AG04450 (cell line): ENCODE measurements at regions of chr12 and their contacts with region 1.

Region 1: DNA sequence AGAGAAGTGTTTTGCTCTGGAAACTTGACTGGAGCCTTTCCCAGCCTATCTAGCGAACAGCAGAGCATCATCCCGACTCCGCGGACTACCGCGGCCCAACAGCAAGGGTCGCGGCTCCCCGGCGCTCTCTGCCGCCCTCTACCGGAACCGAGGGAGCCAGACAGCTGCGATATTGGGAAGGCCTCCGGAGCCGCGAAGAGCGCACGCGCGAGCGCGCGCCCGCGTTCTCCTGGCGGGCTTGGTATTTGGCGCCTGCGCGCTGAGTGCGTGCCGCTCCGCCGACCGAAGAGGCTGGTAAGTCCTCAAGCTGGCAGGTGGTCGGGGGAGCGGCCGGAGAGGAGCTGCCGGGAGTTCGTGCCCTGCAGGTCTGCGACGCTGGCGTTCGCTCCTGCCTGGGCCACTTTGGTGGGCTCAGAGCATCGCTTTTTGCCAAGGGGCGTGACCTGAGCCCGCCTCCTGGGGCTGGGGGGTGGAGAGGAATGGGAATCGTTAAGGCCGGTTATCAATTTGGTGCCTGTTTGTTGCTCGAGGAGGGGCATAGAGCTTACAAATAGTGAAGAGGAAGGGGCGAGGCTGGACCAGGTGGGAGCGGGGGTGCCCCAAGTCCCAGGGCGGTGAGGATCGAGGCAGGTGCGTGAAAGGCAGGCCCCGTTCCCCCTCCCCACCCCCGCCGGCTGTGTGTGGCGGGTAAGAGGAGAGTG is at the start of gene TMEM106C:
- DNase-seq: peak; percentile 74
- H3K4me3 ChIP-seq: peak within 1 kb of the TSS; percentile 87
- H3K27ac ChIP-seq: no peak within 1 kb of the TSS
- H3K27me3 ChIP-seq: peaks cover 3% of the 10 kb centered on the region
- CTCF ChIP-seq: peak; percentile 99
- polyA plus RNA-seq, gene TMEM106C: 93.7 and 96.3 TPM in 2 replicates

Region 2: DNA sequence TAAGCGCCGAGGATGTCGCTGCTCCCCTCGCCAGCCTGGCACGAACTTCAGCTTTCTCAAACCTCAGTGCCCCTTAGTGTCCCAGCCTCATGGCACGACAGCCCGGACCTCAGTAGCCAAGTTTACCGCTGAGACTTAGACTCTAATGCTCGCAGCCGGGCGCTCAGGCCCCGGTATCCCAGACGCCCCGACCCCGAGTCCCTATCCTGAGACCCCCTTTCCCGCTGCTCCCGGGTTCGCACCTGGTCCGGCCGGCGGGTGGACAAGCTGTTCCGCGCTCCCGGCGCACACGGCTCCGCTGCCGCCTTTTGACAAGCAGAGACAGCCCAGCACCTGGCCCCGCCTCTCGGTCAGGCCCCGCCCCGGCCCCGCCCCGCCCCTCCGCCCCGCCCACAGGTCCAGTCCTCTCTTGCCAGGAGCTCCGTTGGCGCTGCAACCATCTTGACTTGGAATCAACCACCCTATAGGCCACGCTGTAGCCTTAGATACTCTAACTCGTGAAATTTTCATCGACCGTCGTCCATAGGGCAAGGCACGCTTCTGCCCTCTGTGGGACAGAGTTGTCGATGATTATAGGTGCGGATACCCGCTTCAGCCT is 58.7 kb before region 1 on chr12 and contains the start of gene VDR:
- CTCF ChIA-PET with region 1: interaction called, 10 read pairs
- POLR2A ChIA-PET with region 1: no interaction called
- DNase-seq: peak; percentile 21
- H3K4me3 ChIP-seq: peak within 1 kb of the TSS; percentile 79
- H3K27ac ChIP-seq: peak within 1 kb of the TSS; percentile 83
- H3K27me3 ChIP-seq: peaks cover 26% of the 10 kb centered on the region
- CTCF ChIP-seq: peak; percentile 21; the same call in 1 of the 2 replicates
- polyA plus RNA-seq, gene VDR: 11.9 and 13.6 TPM in 2 replicates

Region 3: DNA sequence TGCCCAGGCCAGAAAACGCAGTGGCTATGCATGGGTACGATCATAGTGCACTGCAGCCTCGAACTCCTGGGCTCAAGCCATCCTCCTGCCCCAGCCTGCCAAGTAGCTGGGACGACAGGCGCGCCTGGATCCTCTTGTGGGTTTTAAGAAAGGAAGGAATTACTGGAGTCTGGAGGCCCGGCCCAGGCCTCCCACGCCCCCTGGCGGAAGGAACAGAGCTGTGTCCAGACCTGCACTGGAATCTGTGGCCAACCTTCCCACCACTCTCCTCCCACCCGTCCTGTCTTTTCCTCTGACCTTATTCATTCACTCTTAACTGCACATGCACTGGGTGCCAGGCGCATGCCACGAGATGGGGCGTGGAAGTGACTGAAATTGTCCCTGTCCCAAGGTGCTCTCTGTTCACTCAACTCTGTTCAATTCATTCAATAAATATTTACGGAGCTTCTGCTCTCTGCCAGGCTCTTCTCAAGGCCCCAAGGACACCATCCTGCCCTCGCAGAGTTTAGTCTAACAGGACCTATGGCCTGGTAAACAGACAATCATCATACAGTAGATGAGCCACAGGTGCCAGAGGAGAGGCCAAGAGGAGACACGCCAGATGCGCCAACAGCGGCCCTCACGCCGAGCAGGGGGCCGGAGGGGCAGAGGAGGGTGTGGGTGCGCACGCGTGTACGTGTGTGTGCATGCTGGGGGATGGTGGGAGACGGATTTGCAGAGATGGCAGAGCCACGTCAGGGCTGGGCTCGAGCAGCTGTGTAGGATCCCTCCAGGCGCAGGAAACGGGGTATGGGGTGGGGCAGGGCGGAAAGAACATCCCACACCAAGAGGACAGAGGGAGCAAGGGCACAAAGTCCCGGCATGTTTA is 13.8 kb before region 1 on chr12:
- CTCF ChIA-PET with region 1: interaction called, 46 read pairs
- POLR2A ChIA-PET with region 1: no interaction called
- DNase-seq: peak; percentile 55
- H3K4me3 ChIP-seq: no peak overlapping the region
- H3K27ac ChIP-seq: no peak overlapping the region
- H3K27me3 ChIP-seq: peaks cover 23% of the 10 kb centered on the region
- CTCF ChIP-seq: peak; percentile 92

Region 4: GRCh38 chr12:47980197-47980596 is 16.7 kb after region 1 on chr12:
- CTCF ChIA-PET with region 1: interaction called, 11 read pairs
- POLR2A ChIA-PET with region 1: no interaction called
- DNase-seq: no peak
- H3K4me3 ChIP-seq: no peak overlapping the region
- H3K27ac ChIP-seq: no peak overlapping the region
- H3K27me3 ChIP-seq: peaks cover 20% of the 10 kb centered on the region
- CTCF ChIP-seq: no peak